Esophagus muscularis mucosa (tissue), 4 donors: ENCODE measurements at regions of chr5 and their contacts with region 1.

Region 1: DNA sequence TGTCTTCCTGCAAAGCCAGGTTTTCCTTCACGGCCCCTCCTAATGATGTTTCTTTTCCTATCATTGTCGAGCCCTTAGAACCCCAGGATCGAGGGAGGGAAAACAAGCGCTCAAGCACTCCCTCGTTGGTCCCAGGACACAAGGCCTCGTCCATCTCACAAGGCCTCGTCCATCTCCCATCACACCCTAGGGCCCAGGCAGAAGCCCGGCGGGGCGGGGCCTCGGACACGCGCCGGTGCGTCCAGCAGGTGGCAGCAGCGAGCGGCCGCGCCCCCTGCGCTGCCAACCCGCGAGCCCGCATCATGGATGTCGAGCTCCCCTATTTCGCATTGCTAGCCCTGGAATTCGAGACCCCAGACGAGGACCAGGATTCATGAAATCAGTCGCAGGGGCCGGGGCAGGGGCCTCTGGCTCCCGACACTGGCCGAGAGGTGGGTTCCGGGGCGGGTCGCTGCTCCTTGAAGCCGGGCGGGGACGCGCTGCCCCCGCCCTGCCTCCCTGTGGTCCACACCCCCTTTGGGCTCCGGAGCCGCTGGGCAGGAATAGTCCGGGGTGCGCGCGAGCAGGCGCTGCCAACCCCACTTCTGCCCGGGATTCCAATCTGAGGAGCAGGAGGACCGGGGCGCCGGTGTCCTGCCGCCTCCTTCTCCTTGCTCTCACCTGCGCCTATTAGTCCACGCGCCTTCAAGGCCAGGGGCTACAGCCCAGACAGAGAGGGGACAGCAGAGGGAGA is at the start of gene ABLIM3:
- DNase-seq: peak; percentile 94
- H3K4me3 ChIP-seq: peak within 1 kb of the TSS; percentile 70 to 84 (median 83)
- H3K27ac ChIP-seq: peak within 1 kb of the TSS; percentile 75 to 85 (median 79)
- H3K4me1 ChIP-seq: peaks cover 19 to 40% (median 37%) of the 10 kb centered on the region in 4 donors
- H3K27me3 ChIP-seq: no peaks in the 10 kb centered on the region
- CTCF ChIP-seq: peak; percentile 79 to 96 (median 89)
- EP300 ChIP-seq: no peak
- POLR2A ChIP-seq: no peak
- total RNA-seq, gene ABLIM3: 40.9 to 64.5 (median 45.8) TPM

Region 2: GRCh38 chr5:149228618-149229297 is 87.4 kb after region 1 on chr5:
- intact Hi-C with region 1: loop called (anchors 1 kb)
- DNase-seq: no peak
- H3K4me3 ChIP-seq: no peak overlapping the region
- H3K27ac ChIP-seq: peak overlapping the region; percentile 42 to 63 (median 48)
- H3K4me1 ChIP-seq: peaks cover 24 to 36% (median 31%) of the 10 kb centered on the region in 4 donors
- H3K27me3 ChIP-seq: no peaks in the 10 kb centered on the region
- CTCF ChIP-seq: peak; percentile 77 to 82 (median 78)
- EP300 ChIP-seq: no peak
- POLR2A ChIP-seq: no peak

Region 3: GRCh38 chr5:149271716-149272563 is 130.6 kb after region 1 on chr5 and contains the start of gene AFAP1L1:
- intact Hi-C with region 1: loop called (anchors 5 kb)
- DNase-seq: no peak
- H3K4me3 ChIP-seq: peak within 1 kb of the TSS; percentile 69 to 87 (median 78)
- H3K27ac ChIP-seq: peak within 1 kb of the TSS; percentile 76 to 85 (median 80)
- H3K4me1 ChIP-seq: peaks cover 15 to 21% (median 20%) of the 10 kb centered on the region in 4 donors
- H3K27me3 ChIP-seq: no peaks in the 10 kb centered on the region
- CTCF ChIP-seq: no peak
- EP300 ChIP-seq: no peak
- POLR2A ChIP-seq: no peak
- total RNA-seq, gene AFAP1L1: 10.0 to 23.8 (median 16.6) TPM